ENCODE measurements at regions of chr15 and their contacts with region 1.

Region 1: DNA sequence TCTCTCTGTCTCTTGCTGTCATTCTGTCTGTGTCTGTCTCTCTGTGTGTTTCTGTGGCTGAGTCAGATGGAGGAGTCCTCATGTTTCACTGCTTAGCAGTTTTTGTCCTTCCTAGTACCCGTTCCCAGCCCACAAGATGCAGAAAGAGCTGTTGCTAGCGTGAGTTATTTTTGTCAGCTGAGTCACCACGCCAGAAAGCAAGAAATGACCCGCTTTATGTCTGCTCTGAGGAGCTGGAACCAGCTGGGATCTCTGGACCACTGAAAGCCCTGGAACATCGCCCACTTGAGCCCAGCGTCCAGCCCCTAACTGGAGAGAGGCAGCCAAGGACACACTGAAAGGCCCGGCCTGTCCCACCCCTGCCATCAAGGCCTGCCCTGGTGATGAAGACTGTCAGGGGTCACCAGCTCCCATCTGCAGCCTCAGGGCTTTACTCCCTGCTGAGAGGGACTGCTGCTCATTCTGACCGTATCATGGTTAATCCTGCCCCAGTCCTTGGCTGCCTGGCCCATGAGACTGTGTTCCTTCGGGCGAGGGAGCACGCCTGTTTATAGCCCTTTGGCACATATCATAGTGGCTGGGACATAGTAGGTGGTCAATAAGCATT is 101.7 kb upstream of the TPM1 start:
- DNase-seq: no peak
- H3K4me3 ChIP-seq: no peak overlapping the region
- H3K27ac ChIP-seq: no peak overlapping the region
- H3K4me1 ChIP-seq: no peaks in the 10 kb centered on the region
- CTCF ChIP-seq: no peak

Region 2: DNA sequence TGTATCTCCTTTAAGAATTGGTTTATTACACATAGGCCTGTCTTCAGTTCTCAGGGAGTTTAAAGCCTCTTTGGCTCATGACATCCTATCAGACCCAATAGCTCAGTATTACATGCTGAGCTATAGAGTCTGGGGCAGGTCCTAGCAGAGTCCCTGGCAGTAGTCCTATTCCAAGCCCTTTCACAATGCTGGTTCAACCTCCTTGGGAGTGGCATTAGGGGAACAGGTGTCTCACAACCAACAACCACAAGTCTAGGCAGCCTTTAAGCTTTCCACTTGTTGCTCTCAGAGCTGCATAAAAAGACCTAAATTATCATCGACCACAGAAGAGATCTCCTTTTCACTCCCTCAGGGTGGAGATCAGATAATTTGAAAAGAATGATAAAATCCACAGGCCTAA is 752.9 kb before region 1 on chr15:
- CTCF ChIA-PET with region 1: no interaction called
- POLR2A ChIA-PET with region 1: interaction called, 10 read pairs
- intact Hi-C with region 1: no loop called
- DNase-seq: no peak
- H3K4me3 ChIP-seq: no peak overlapping the region
- H3K27ac ChIP-seq: no peak overlapping the region
- H3K4me1 ChIP-seq: no peaks in the 10 kb centered on the region
- CTCF ChIP-seq: no peak

Region 3: DNA sequence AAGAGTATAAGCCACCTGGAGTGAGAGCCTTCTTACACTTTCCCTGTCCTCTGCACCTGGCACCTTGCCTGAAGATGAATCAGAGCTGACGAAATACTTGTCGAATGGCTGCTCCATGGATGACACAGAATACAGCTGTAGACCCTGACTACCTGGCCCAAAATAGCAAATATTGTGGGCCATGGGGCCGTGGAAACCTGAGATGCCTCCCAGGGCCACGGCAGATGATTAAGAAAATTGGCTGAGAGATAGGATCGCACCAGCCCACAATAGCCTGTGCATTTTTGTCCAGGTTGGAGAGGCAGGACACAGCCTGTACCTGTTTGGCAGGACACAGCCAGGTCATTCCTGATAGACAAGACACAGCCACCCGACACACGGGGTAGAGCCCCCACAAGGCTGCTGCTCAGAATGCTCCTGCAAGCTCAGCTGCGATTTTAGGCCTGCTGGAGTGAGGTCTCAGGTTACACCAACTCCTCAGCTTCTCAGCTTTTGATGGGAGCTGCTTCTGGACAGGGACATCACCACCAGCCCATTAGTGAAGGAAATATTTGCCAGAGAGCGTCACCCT is 78.8 kb after region 1 on chr15:
- CTCF ChIA-PET with region 1: no interaction called
- POLR2A ChIA-PET with region 1: no interaction called
- intact Hi-C with region 1: no loop called
- DNase-seq: no peak
- H3K4me3 ChIP-seq: no peak overlapping the region
- H3K27ac ChIP-seq: no peak overlapping the region
- H3K4me1 ChIP-seq: no peaks in the 10 kb centered on the region
- CTCF ChIP-seq: no peak

Measured in OCI-LY7 (cell line).